B cell (primary cell): ENCODE measurements at regions of chr6 and their contacts with region 1.

Region 1: DNA sequence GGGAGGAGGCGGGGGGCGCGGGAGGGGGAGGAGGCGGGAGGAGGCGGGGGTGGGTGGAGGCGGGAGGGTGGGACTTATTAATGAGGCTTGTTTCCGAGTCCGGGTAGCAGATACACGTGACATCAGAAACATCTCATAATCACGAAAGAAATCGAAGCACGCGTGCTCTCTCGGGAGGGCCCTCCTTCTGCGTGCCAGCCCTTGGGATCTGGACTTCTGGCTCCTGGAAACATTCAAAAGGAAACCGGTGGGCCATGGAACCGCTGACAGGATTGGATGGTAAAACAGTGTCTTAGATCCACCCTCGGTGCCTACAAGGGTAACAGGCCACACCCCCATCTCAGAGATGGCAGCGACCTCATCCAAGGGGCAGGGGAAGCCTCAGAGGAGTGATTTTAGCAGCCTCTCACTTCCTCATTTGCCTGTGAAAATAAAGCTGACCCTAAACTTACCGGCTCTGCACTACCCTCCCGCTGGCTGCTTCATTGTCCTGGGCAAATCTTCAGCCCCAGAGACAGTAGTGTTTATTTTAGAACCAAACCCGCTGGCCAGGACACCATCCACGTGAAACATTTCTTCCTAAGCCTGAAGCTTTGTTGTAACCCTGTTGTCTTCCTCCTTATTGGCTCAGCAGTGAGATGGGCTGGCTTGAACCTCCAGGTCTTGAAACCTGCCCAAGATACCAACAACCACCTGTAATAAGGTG is 97.5 kb downstream of the PSMG4 start:
- DNase-seq: peak; percentile 97
- ATAC-seq: peak; percentile 96
- H3K4me3 ChIP-seq: peak overlapping the region; percentile 0 to 82 (median 66)
- H3K4me3 Mint-ChIP-seq: peak overlapping the region; percentile 96
- H3K27ac ChIP-seq: peak overlapping the region; percentile 67 to 82
- H3K27ac Mint-ChIP-seq: peak overlapping the region; percentile 96
- H3K4me1 ChIP-seq: peaks cover 26 to 37% of the 10 kb centered on the region in 2 donors
- H3K4me1 Mint-ChIP-seq: peaks cover 48% of the 10 kb centered on the region
- H3K27me3 ChIP-seq: no peaks in the 10 kb centered on the region
- H3K27me3 Mint-ChIP-seq: no peaks in the 10 kb centered on the region
- CTCF ChIP-seq: no peak

Region 2: DNA sequence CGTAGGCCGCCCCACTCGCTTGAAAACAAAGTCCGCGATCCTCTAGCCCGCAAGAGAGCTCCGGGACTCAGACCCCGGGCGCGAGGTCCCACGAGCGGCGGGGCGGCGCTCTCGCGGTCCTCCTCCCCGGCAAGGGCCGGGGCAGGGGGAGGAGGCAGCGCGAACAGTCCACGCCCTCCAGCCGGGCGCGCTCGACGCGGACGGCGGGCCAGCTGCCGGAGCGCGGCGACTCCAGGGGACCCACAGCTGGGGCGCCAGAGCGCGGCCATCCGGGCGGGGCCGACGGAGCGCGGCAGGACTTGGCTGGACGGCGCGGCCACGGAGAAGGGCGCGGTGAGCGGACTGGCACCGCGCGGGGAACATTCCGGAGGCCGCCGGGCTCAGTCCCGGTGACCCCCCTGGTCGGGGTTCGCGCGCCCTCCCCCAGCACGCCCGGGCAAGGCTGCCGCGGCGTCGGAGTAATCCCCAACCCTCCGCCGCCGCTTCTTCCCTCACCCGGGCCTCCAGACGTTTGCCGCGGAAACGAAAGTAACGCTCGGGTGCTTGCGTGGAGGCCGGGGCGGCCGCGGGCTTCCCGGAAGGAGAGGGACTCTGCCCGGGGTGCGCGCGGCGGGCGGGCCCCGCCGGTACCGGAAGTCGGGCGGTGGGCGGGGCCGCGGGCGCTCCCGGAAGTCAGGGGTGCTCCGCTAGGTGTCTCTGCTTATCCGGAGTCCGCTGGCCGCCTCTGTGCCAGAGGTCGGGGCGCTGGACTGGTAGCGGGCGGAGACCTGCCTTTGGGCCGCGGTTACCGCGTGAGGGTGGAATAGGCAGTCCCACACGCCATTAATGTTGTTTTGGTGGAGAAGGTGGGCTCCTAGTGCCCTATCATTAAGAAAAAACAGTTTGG is 287.6 kb before region 1 on chr6 and contains the start of gene RIPK1:
- CTCF ChIA-PET with region 1: no interaction called
- POLR2A ChIA-PET with region 1: no interaction called
- intact Hi-C with region 1: loop called (anchors 5 kb)
- DNase-seq: peak; percentile 95
- ATAC-seq: peak; percentile 73
- H3K4me3 ChIP-seq: peak within 1 kb of the TSS; percentile 55 to 87 (median 85)
- H3K4me3 Mint-ChIP-seq: peak within 1 kb of the TSS; percentile 98
- H3K27ac ChIP-seq: peak within 1 kb of the TSS; percentile 92 to 99
- H3K27ac Mint-ChIP-seq: peak within 1 kb of the TSS; percentile 99
- H3K4me1 ChIP-seq: peaks cover 17 to 23% of the 10 kb centered on the region in 2 donors
- H3K4me1 Mint-ChIP-seq: peaks cover 43% of the 10 kb centered on the region
- H3K27me3 ChIP-seq: no peaks in the 10 kb centered on the region
- H3K27me3 Mint-ChIP-seq: no peaks in the 10 kb centered on the region
- CTCF ChIP-seq: no peak
- total RNA-seq, gene RIPK1: 26.2 and 28.1 TPM in 2 replicates

Region 3: GRCh38 chr6:3258720-3259490 is 97.3 kb before region 1 on chr6 and contains the start of gene PSMG4:
- CTCF ChIA-PET with region 1: no interaction called
- POLR2A ChIA-PET with region 1: no interaction called
- intact Hi-C with region 1: loop called (anchors 5 kb)
- DNase-seq: peak; percentile 92
- ATAC-seq: peak; percentile 92
- H3K4me3 ChIP-seq: peak within 1 kb of the TSS; percentile 65 to 86 (median 78)
- H3K4me3 Mint-ChIP-seq: peak within 1 kb of the TSS; percentile 97
- H3K27ac ChIP-seq: peak within 1 kb of the TSS; percentile 12 to 65
- H3K27ac Mint-ChIP-seq: peak within 1 kb of the TSS; percentile 91
- H3K4me1 ChIP-seq: peaks cover 20 to 34% of the 10 kb centered on the region in 2 donors
- H3K4me1 Mint-ChIP-seq: peaks cover 35% of the 10 kb centered on the region
- H3K27me3 ChIP-seq: no peaks in the 10 kb centered on the region
- H3K27me3 Mint-ChIP-seq: peaks cover 3% of the 10 kb centered on the region
- CTCF ChIP-seq: no peak
- total RNA-seq, gene PSMG4: 31.8 and 31.9 TPM in 2 replicates

Region 4: DNA sequence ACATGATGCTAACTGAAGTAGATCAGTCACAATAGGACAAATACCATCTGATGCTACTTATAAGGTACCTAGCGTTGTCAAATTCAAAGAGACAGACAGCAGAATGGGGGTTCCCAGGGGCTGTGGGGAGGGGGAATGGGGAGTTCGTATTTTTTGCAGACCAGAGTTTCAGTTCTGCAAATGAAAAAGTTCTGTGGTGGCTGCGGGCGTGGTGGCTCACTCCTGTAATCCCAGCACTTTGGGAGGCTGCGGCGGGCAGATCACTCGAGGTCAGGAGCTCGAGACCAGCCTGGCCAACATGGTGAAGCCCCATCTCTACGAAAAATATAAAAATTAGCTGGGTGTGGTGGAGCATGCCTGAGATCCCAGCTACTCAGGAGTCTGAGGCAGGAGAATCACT is 32.6 kb after region 1 on chr6:
- CTCF ChIA-PET with region 1: no interaction called
- POLR2A ChIA-PET with region 1: interaction called, 3 read pairs
- intact Hi-C with region 1: loop called (anchors 1 kb)
- DNase-seq: peak; percentile 78
- ATAC-seq: peak; percentile 89
- H3K4me3 ChIP-seq: no peak overlapping the region
- H3K4me3 Mint-ChIP-seq: peak overlapping the region; percentile 1
- H3K27ac ChIP-seq: peak overlapping the region in 1 of 2 donors; percentile 35
- H3K27ac Mint-ChIP-seq: peak overlapping the region; percentile 59
- H3K4me1 ChIP-seq: peaks cover 22 to 27% of the 10 kb centered on the region in 2 donors
- H3K4me1 Mint-ChIP-seq: peaks cover 32% of the 10 kb centered on the region
- H3K27me3 ChIP-seq: no peaks in the 10 kb centered on the region
- H3K27me3 Mint-ChIP-seq: peaks cover 6% of the 10 kb centered on the region
- CTCF ChIP-seq: no peak

Region 5: GRCh38 chr6:3419624-3420272 is 63.5 kb after region 1 on chr6:
- CTCF ChIA-PET with region 1: no interaction called
- POLR2A ChIA-PET with region 1: no interaction called
- intact Hi-C with region 1: no loop called
- DNase-seq: no peak
- ATAC-seq: no peak
- H3K4me3 ChIP-seq: no peak overlapping the region
- H3K4me3 Mint-ChIP-seq: no peak overlapping the region
- H3K27ac ChIP-seq: no peak overlapping the region
- H3K27ac Mint-ChIP-seq: no peak overlapping the region
- H3K4me1 ChIP-seq: no peaks in the 10 kb centered on the region
- H3K4me1 Mint-ChIP-seq: no peaks in the 10 kb centered on the region
- H3K27me3 ChIP-seq: peaks cover 0 to 6% (median 3%) of the 10 kb centered on the region in 4 experiments
- H3K27me3 Mint-ChIP-seq: peaks cover 40% of the 10 kb centered on the region
- CTCF ChIP-seq: no peak

Region 6: DNA sequence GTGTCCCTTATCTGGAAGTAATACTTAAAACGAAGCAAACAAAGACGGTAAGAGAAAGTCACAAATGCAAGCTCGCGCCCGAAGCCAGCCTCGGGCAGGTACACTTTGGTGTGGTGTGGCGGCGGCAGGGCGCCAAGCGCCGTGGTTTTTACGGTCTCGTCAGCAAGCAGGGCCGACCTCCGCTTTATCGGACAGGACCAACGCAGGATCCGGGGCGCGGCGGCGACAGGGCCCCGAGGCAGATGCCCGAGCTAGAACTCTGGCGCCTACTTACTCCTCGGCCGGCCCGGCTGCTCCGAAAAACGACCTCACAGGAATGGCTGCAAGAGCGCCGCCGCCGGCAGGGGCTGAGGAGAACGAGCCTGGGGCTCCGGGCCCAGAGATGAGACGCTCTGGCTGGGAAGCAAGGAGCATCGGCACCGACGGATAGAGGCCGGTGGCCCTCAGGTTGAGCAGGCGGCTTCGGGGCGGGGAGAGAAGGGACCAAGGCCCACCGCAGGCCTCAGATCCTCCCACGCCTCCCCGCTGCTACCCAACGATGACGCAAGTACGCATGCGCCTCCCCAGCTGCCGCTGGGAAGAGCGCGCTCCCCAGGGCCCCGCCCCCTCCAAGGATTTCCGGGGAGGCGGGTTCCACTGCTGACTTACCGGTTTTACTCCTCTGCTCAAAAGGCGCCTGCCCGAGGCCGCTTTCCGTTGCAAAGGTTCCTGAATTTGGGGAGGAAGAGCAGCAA is 662.1 kb after region 1 on chr6:
- CTCF ChIA-PET with region 1: no interaction called
- POLR2A ChIA-PET with region 1: no interaction called
- intact Hi-C with region 1: loop called (anchors 5 kb)
- DNase-seq: peak; percentile 98
- ATAC-seq: peak; percentile 73
- H3K4me3 ChIP-seq: peak overlapping the region; percentile 71 to 91 (median 80)
- H3K4me3 Mint-ChIP-seq: peak overlapping the region; percentile 96
- H3K27ac ChIP-seq: peak overlapping the region; percentile 94 to 97
- H3K27ac Mint-ChIP-seq: peak overlapping the region; percentile 99
- H3K4me1 ChIP-seq: peaks cover 30 to 40% of the 10 kb centered on the region in 2 donors
- H3K4me1 Mint-ChIP-seq: peaks cover 70% of the 10 kb centered on the region
- H3K27me3 ChIP-seq: no peaks in the 10 kb centered on the region
- H3K27me3 Mint-ChIP-seq: no peaks in the 10 kb centered on the region
- CTCF ChIP-seq: peak; percentile 43

Region 7: GRCh38 chr6:4775584-4776494 is 1419.6 kb after region 1 on chr6 and contains the start of gene CDYL:
- CTCF ChIA-PET with region 1: no interaction called
- POLR2A ChIA-PET with region 1: no interaction called
- intact Hi-C with region 1: loop called (anchors 10 kb)
- DNase-seq: peak; percentile 94
- ATAC-seq: peak; percentile 74
- H3K4me3 ChIP-seq: peak within 1 kb of the TSS; percentile 51 to 83 (median 72)
- H3K4me3 Mint-ChIP-seq: peak within 1 kb of the TSS; percentile 97
- H3K27ac ChIP-seq: peak within 1 kb of the TSS in 1 of 2 donors; percentile 69
- H3K27ac Mint-ChIP-seq: peak within 1 kb of the TSS; percentile 93
- H3K4me1 ChIP-seq: peaks cover 19 to 26% of the 10 kb centered on the region in 2 donors
- H3K4me1 Mint-ChIP-seq: peaks cover 41% of the 10 kb centered on the region
- H3K27me3 ChIP-seq: no peaks in the 10 kb centered on the region
- H3K27me3 Mint-ChIP-seq: no peaks in the 10 kb centered on the region
- CTCF ChIP-seq: no peak
- total RNA-seq, gene CDYL: 61.0 and 63.0 TPM in 2 replicates